ENCODE measurements at regions of chr22 and their contacts with region 1.

Region 1: GRCh38 chr22:42296381-42296853 is 26.0 kb upstream of the TCF20 start:
- DNase-seq: peak in 8 of 10 donors; percentile 18 to 77 (median 40)
- ATAC-seq: peak; percentile 37 to 43
- H3K4me3 Mint-ChIP-seq: peak overlapping the region in 3 of 10 donors; percentile 22 to 60 (median 29)
- H3K27ac Mint-ChIP-seq: peak overlapping the region in 7 of 10 donors; percentile 11 to 88 (median 71)
- H3K4me1 Mint-ChIP-seq: peaks cover 46 to 81% (median 76%) of the 10 kb centered on the region in 4 donors
- H3K27me3 Mint-ChIP-seq: no peaks in the 10 kb centered on the region

Region 2: GRCh38 chr22:42188808-42189447 is 107.5 kb before region 1 on chr22:
- POLR2A ChIA-PET with region 1: no interaction called
- DNase-seq: no peak
- ATAC-seq: no peak
- H3K4me3 Mint-ChIP-seq: no peak overlapping the region
- H3K27ac Mint-ChIP-seq: peak overlapping the region in 4 of 10 donors; percentile 8 to 45 (median 34)
- H3K4me1 Mint-ChIP-seq: peaks cover 35 to 76% (median 73%) of the 10 kb centered on the region in 4 donors
- H3K27me3 Mint-ChIP-seq: no peaks in the 10 kb centered on the region

Region 3: DNA sequence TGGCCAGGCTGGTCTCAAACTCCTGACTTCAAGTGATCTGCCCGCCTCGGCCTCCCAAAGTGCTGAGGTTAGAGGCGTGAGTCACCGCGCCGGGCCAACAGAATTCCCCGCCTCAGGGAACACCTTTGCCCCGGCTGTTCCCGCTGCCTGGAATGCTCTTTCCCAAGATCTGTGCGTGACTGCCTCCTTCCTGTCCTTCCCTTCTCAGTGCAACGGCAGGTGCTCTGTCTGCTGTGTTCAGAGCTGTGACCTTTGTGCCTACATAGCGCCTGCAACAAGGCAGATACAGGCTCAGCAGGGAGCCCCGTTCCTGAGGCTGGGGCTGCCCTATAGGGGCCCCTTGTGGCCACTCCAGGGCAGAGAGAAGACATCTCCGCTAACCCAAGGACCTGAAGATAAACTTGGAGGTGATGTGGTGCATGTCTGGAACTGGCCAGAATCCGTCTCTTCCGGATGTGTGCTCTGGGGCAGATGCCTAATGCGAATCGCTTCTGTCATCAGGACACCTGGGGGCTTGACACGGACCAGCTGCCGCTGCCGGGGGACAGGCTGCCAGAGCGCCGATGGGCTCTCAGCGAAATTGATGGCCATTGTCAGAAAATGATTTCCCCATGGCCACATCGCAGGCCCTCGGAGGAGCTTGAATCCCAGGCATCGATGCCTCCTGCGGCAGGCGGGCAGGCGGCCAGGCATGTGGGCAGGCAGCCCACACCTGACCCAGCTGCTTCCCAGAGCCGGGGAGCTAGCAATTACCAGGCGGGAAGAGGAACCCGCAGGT is 17.6 kb after region 1 on chr22:
- POLR2A ChIA-PET with region 1: interaction called, 37 read pairs
- DNase-seq: peak; percentile 17 to 74 (median 47)
- ATAC-seq: peak; percentile 64 to 74
- H3K4me3 Mint-ChIP-seq: peak overlapping the region in 7 of 10 donors; percentile 29 to 90 (median 74)
- H3K27ac Mint-ChIP-seq: peak overlapping the region in 9 of 10 donors; percentile 18 to 94 (median 80)
- H3K4me1 Mint-ChIP-seq: peaks cover 41 to 75% (median 60%) of the 10 kb centered on the region in 4 donors
- H3K27me3 Mint-ChIP-seq: peaks cover 0 to 2% (median 0%) of the 10 kb centered on the region in 5 donors

Measured in naive thymus-derived CD8-positive, alpha-beta T cell (primary cell).